ENCODE measurements at regions of chr16 and their contacts with region 1.

Region 1: DNA sequence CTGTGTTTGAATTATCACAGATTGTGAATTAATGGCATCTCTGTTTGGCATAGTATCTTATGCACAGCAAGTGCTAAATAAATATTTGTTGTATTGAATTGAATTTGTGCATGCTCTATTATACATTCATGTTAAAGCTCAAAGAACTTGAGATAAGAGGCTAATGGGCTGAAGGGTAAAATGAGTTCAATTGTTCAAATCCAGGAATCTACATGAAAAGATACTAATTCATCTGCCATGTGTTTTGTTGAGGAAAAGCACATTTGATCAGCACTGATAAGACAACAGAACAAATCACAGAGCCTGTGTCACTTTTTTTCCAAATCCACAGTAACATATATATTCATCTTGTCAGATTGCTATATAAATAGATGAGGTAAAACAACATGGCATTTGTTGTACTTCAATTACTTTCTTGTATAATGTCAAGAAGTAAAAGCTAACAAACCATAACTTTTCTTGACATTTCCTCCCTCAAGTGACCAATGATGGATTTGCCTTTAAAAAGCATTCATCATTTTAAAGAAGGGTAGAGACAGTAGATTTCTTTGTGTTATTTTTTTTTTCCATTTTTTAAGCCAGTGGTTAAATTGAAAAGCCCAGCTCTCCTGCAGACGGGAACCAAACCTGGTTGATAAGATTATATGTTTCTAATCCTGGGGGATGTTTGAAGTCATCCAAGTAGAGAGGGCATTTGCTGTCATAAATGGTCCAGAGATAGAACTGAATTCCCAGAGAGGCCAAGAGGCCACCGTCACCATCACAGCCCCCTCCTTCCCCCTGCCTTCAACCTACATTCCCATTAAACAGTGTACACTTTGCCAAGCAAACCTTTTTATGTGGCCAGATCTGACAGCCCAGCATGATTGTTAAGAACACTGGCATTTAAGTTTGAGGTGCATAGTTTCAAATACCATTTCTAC is 123.0 kb downstream of the CHD9NB start:
- DNase-seq: no peak
- ATAC-seq: no peak
- H3K4me3 ChIP-seq: no peak overlapping the region
- H3K4me3 Mint-ChIP-seq: no peak overlapping the region
- H3K27ac ChIP-seq: no peak overlapping the region
- H3K27ac Mint-ChIP-seq: no peak overlapping the region
- H3K4me1 ChIP-seq: no peaks in the 10 kb centered on the region
- H3K4me1 Mint-ChIP-seq: no peaks in the 10 kb centered on the region
- H3K27me3 ChIP-seq: no peaks in the 10 kb centered on the region
- H3K27me3 Mint-ChIP-seq: peaks cover 6% of the 10 kb centered on the region
- CTCF ChIP-seq: no peak

Region 2: GRCh38 chr16:51818342-51818944 is 1111.3 kb before region 1 on chr16:
- CTCF ChIA-PET with region 1: no interaction called
- POLR2A ChIA-PET with region 1: no interaction called
- intact Hi-C with region 1: no loop called
- DNase-seq: no peak
- ATAC-seq: no peak
- H3K4me3 ChIP-seq: no peak overlapping the region
- H3K4me3 Mint-ChIP-seq: no peak overlapping the region
- H3K27ac ChIP-seq: no peak overlapping the region
- H3K27ac Mint-ChIP-seq: no peak overlapping the region
- H3K4me1 ChIP-seq: no peaks in the 10 kb centered on the region
- H3K4me1 Mint-ChIP-seq: no peaks in the 10 kb centered on the region
- H3K27me3 ChIP-seq: no peaks in the 10 kb centered on the region
- H3K27me3 Mint-ChIP-seq: no peaks in the 10 kb centered on the region
- CTCF ChIP-seq: no peak

Region 3: GRCh38 chr16:52861614-52862022 is 68.1 kb before region 1 on chr16:
- CTCF ChIA-PET with region 1: no interaction called
- POLR2A ChIA-PET with region 1: no interaction called
- intact Hi-C with region 1: no loop called
- DNase-seq: no peak
- ATAC-seq: no peak
- H3K4me3 ChIP-seq: no peak overlapping the region
- H3K4me3 Mint-ChIP-seq: no peak overlapping the region
- H3K27ac ChIP-seq: no peak overlapping the region
- H3K27ac Mint-ChIP-seq: no peak overlapping the region
- H3K4me1 ChIP-seq: no peaks in the 10 kb centered on the region
- H3K4me1 Mint-ChIP-seq: no peaks in the 10 kb centered on the region
- H3K27me3 ChIP-seq: no peaks in the 10 kb centered on the region
- H3K27me3 Mint-ChIP-seq: peaks cover 5% of the 10 kb centered on the region
- CTCF ChIP-seq: no peak

Region 4: GRCh38 chr16:52948946-52949345 is 19.2 kb after region 1 on chr16:
- CTCF ChIA-PET with region 1: no interaction called
- POLR2A ChIA-PET with region 1: no interaction called
- intact Hi-C with region 1: no loop called
- DNase-seq: no peak
- ATAC-seq: no peak
- H3K4me3 ChIP-seq: no peak overlapping the region
- H3K4me3 Mint-ChIP-seq: no peak overlapping the region
- H3K27ac ChIP-seq: no peak overlapping the region
- H3K27ac Mint-ChIP-seq: no peak overlapping the region
- H3K4me1 ChIP-seq: no peaks in the 10 kb centered on the region
- H3K4me1 Mint-ChIP-seq: no peaks in the 10 kb centered on the region
- H3K27me3 ChIP-seq: peaks cover 0 to 3% of the 10 kb centered on the region in 2 experiments
- H3K27me3 Mint-ChIP-seq: peaks cover 9% of the 10 kb centered on the region
- CTCF ChIP-seq: no peak

Region 5: DNA sequence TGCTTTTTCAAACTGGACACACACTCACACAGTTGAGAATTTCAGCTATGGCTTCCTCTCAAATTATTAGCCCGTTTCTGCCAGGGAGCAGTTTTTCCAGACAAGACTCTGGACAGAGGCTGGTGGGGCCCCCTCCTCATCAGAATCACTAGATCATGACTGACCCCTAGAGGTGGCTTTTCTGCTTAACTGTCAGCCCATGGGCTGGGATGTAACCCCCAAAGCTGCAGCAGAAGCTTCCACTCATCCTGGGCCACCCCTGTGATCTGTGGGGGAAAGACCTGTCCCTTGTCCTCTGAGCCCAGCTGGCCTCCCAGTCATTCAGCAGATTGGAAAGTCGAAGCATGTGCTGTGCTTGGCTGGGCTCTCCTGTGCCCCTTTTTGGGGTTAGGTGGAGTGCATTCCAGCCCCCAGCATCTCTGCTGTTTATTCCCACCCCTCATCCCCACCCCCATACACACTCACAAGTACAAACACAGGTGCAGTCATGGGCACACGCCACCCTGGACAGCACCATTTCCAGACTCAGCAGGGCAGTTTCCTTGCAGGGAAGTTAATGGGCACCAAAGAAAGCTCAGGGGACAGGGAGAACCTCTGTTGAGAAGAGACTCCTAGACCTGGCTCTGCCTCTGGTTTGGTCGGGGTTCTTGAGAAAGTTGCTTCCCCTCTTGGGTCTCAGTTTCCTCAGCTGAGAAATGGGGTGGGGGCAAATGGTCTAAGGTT is 426.9 kb after region 1 on chr16:
- CTCF ChIA-PET with region 1: no interaction called
- POLR2A ChIA-PET with region 1: no interaction called
- intact Hi-C with region 1: no loop called
- DNase-seq: no peak
- ATAC-seq: no peak
- H3K4me3 ChIP-seq: no peak overlapping the region
- H3K4me3 Mint-ChIP-seq: no peak overlapping the region
- H3K27ac ChIP-seq: no peak overlapping the region
- H3K27ac Mint-ChIP-seq: no peak overlapping the region
- H3K4me1 ChIP-seq: no peaks in the 10 kb centered on the region
- H3K4me1 Mint-ChIP-seq: no peaks in the 10 kb centered on the region
- H3K27me3 ChIP-seq: no peaks in the 10 kb centered on the region
- H3K27me3 Mint-ChIP-seq: peaks cover 7% of the 10 kb centered on the region
- CTCF ChIP-seq: no peak

Region 6: DNA sequence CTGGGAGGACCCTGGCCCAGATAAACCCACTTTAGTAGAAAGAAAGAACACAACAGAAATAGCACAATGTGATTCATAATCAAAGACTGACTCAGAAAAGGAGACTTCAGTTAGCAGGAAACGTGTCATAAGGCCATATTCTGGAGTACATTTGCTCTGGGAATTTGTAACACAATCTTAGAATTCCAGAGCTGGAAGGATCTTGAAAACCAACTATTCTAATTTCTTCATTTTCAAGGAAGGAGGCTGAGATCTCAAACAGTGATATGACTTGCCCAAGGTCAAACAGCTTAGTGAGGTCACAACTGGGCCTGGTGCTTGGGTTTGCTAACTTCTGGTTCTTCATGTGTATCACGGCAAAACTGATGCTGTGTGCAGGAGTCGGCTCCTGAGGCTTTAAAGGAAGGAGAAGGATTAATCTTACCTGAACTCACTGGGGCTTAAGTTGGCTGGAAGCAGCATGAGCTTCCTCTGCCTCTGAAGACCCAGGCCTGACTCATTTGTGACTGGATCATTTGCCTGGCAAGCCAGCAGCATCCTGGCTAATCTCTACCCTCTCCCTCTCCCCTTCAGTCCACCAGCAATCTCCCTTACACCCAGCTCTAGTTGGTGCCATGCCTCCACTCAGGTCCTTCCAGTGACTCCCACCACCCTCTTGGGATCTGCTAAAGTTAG is 1206.3 kb after region 1 on chr16:
- CTCF ChIA-PET with region 1: no interaction called
- POLR2A ChIA-PET with region 1: no interaction called
- intact Hi-C with region 1: loop called in 1 of 2 experiments (anchors 5 kb)
- DNase-seq: no peak
- ATAC-seq: no peak
- H3K4me3 ChIP-seq: no peak overlapping the region
- H3K4me3 Mint-ChIP-seq: no peak overlapping the region
- H3K27ac ChIP-seq: no peak overlapping the region
- H3K27ac Mint-ChIP-seq: no peak overlapping the region
- H3K4me1 ChIP-seq: no peaks in the 10 kb centered on the region
- H3K4me1 Mint-ChIP-seq: no peaks in the 10 kb centered on the region
- H3K27me3 ChIP-seq: peaks cover 0 to 2% of the 10 kb centered on the region in 2 experiments
- H3K27me3 Mint-ChIP-seq: no peaks in the 10 kb centered on the region
- CTCF ChIP-seq: no peak